GM18951 (cell line): ENCODE measurements at regions of chr2 and their contacts with region 1.

Region 1: DNA sequence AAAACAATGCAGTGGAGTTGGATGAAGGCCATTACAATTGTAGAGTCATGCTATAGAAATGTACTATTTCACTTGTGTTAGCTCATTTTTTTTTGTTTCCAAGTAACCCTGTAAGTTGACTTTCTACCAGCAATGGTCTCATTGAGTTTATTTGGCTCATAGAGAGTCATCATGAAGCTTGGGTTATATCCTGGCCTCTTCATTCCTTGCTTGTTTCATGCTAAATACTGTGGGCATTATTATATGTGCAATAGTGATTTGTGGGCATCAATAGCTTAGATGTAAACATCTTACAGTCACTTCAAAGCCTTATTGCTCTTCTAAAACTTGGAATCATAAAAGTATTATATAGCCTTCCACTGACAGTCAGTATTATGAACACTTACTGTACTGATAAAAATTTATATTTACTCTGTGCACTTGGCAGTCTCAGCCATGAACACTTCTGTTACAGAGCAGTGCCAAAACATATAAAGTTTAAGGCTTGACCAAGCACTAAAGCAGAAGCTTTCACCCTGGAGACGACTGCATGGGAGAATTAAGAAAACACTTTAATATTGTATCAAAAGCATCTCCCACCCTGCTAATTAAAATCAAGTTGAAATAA is 751.2 kb downstream of the SATB2 start:
- POLR2A ChIP-seq: no peak

Region 2: GRCh38 chr2:197946562-197946961 is 760.0 kb before region 1 on chr2:
- in situ Hi-C with region 1: loop called (anchors 25 kb)
- POLR2A ChIP-seq: no peak